ENCODE measurements at regions of chr1 and their contacts with region 1.

Region 1: DNA sequence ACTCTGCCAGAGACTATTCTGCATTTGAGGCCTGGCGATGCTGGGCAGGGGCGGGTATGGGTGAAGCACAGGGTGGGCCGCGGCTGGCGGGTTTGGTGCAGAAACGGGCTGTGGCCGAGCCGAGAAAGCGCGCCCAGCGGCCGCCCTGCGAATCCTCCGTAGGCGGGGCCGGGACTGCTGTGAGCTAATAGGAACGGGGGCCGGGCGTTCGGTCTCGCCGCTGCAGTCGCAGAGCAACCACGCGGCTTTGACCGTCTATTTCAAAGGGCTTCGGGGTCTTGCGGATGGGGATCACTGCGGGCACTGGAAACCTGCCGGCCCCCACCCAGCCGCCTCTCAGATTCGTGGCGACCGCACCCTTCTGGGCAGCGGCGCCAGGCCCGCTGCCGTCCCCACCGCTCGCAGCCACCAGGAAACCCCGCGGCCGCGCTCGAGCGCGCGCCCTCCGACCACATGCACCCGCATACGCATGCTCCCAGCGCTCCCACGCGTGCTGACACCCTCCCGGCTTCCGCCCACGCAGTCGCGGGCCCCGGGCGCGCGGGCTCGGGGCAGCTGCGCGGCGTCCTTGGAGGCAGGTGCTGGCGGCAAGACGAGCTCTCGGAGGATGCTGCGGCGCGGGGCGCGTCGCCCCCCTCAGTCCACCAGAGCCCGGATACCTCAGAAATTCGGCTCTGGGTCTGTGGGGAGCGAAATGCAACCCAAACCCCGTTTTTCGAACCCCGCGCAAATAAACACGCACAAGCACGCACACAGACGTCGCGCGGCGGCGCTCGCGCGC is 32.6 kb downstream of the DNTTIP2 start:
- DNase-seq: peak; percentile 74
- ATAC-seq: peak; percentile 61
- H3K4me3 ChIP-seq: peak overlapping the region; percentile 92
- H3K27ac ChIP-seq: peak overlapping the region; percentile 89
- H3K4me1 ChIP-seq: peaks cover 4% of the 10 kb centered on the region
- H3K27me3 ChIP-seq: no peaks in the 10 kb centered on the region
- CTCF ChIP-seq: 0 out of 2 replicates have a peak, but pooled peaks have one; percentile 13
- POLR2A ChIP-seq: peak; percentile 33; the same call in 1 of the 2 replicates
- RAD21 ChIP-seq: 0 out of 2 replicates have a peak, but pooled peaks have one; percentile 10

Region 2: DNA sequence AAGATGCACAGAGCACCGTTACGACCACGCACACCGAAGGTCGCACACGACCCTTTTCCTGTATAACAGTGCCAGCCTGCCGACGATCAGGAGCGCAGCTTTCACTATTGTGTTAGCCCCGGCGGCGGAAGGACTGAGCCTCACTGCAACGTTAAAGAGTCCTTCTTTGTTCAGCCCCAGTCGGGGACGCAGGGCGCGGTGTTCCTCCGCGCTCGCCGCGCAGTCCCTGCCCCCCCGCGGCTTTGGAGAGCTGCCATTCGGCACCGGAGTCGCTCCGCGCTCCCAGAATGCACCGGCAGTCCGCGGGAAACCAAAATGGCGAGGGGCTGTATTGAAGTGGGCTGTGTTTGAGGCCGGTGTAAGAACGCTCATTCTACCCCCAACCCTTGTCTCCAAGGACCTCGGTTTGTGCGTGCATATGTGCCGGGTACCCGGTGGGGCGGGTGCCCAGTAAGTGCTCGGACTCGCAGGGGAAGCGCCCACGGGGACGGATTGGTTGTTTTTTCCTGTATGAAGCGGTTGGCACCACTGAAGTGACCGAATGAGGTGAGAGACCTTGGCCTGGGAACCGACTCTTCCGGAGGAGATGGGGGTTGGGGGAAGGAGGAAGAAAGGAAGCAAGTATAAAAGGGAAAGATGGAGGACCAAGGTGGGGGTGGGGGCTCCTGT is 767.3 kb before region 1 on chr1 and contains the start of gene MTF2:
- CTCF ChIA-PET with region 1: no interaction called
- POLR2A ChIA-PET with region 1: no interaction called
- dilution Hi-C with region 1: no loop called
- in situ Hi-C with region 1: no loop called
- intact Hi-C with region 1: loop called (anchors 1 kb)
- DNase-seq: peak; percentile 97
- ATAC-seq: peak; percentile 88
- H3K4me3 ChIP-seq: peak within 1 kb of the TSS; percentile 78
- H3K27ac ChIP-seq: peak within 1 kb of the TSS; percentile 77
- H3K4me1 ChIP-seq: no peaks in the 10 kb centered on the region
- H3K27me3 ChIP-seq: no peaks in the 10 kb centered on the region; the same call in 1 of the 2 replicates
- CTCF ChIP-seq: no peak
- POLR2A ChIP-seq: peak; percentile 91
- RAD21 ChIP-seq: 0 out of 2 replicates have a peak, but pooled peaks have one; percentile 3
- total RNA-seq, gene MTF2: 33.3 and 39.8 TPM in 2 replicates

Region 3: GRCh38 chr1:93345633-93346420 is 500.6 kb before region 1 on chr1 and contains the start of gene DR1:
- CTCF ChIA-PET with region 1: interaction called, 3 read pairs
- POLR2A ChIA-PET with region 1: no interaction called
- dilution Hi-C with region 1: no loop called
- in situ Hi-C with region 1: no loop called
- intact Hi-C with region 1: loop called (anchors 5 kb)
- DNase-seq: peak; percentile 95
- ATAC-seq: peak; percentile 90
- H3K4me3 ChIP-seq: peak within 1 kb of the TSS; percentile 83
- H3K27ac ChIP-seq: peak within 1 kb of the TSS; percentile 93
- H3K4me1 ChIP-seq: peaks cover 3% of the 10 kb centered on the region; the same call in 1 of the 2 replicates
- H3K27me3 ChIP-seq: no peaks in the 10 kb centered on the region
- CTCF ChIP-seq: no peak
- POLR2A ChIP-seq: peak; percentile 91
- RAD21 ChIP-seq: no peak
- total RNA-seq, gene DR1: 39.4 and 46.9 TPM in 2 replicates

Region 4: GRCh38 chr1:93437976-93438605 is 408.3 kb before region 1 on chr1:
- CTCF ChIA-PET with region 1: no interaction called
- POLR2A ChIA-PET with region 1: interaction called, 6 read pairs
- dilution Hi-C with region 1: no loop called
- in situ Hi-C with region 1: no loop called
- intact Hi-C with region 1: loop called (anchors 1 kb)
- DNase-seq: peak; percentile 65
- ATAC-seq: peak; percentile 82
- H3K4me3 ChIP-seq: no peak overlapping the region
- H3K27ac ChIP-seq: no peak overlapping the region
- H3K4me1 ChIP-seq: no peaks in the 10 kb centered on the region
- H3K27me3 ChIP-seq: peaks cover 17% of the 10 kb centered on the region
- CTCF ChIP-seq: peak; percentile 78
- POLR2A ChIP-seq: no peak
- RAD21 ChIP-seq: peak; percentile 81

Region 5: DNA sequence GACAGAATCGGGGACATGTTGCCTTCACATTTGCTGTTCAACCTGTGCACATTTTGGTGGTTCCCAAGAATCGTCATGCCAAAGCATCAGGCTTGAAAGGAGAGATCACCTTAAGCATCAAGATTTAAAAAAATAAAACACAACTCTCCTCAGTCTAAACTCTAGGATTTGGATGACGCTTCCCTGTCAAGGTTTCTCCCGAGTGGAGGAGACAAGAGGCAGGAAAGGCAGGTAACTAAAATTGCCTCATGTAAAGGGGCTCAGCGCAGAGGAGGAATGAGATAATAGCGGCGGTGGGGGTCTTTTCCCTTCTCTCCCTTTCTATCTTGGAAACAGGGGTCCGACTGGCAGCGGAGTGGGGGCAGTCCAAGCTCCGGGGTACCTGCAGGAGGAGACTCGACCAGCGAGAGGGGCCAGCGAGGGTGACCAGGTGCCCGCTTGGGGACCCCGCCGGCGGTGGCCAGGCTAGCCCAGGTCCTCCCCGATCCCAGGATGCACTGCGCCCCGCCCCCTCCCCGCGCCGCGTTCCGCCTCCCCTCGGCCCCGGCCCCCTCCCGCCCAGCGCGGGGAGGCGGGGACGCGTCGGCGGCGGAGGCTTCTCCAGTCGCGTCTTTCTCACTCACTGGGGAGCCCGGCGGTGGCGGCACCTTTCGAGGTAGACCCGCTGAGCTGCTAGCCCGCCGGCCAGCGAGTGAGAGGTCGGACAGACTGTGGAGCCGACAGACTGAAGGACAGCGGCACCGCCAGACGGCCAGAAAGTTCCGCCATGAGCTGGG is 398.7 kb before region 1 on chr1 and contains the start of gene FNBP1L:
- CTCF ChIA-PET with region 1: no interaction called
- POLR2A ChIA-PET with region 1: no interaction called
- dilution Hi-C with region 1: no loop called
- in situ Hi-C with region 1: loop called (anchors 5 kb)
- intact Hi-C with region 1: no loop called
- DNase-seq: peak; percentile 52
- ATAC-seq: peak; percentile 93
- H3K4me3 ChIP-seq: peak within 1 kb of the TSS; percentile 99
- H3K27ac ChIP-seq: peak within 1 kb of the TSS; percentile 64
- H3K4me1 ChIP-seq: no peaks in the 10 kb centered on the region
- H3K27me3 ChIP-seq: no peaks in the 10 kb centered on the region
- CTCF ChIP-seq: no peak
- POLR2A ChIP-seq: no peak
- RAD21 ChIP-seq: no peak
- total RNA-seq, gene FNBP1L: 15.2 and 24.4 TPM in 2 replicates

Region 6: DNA sequence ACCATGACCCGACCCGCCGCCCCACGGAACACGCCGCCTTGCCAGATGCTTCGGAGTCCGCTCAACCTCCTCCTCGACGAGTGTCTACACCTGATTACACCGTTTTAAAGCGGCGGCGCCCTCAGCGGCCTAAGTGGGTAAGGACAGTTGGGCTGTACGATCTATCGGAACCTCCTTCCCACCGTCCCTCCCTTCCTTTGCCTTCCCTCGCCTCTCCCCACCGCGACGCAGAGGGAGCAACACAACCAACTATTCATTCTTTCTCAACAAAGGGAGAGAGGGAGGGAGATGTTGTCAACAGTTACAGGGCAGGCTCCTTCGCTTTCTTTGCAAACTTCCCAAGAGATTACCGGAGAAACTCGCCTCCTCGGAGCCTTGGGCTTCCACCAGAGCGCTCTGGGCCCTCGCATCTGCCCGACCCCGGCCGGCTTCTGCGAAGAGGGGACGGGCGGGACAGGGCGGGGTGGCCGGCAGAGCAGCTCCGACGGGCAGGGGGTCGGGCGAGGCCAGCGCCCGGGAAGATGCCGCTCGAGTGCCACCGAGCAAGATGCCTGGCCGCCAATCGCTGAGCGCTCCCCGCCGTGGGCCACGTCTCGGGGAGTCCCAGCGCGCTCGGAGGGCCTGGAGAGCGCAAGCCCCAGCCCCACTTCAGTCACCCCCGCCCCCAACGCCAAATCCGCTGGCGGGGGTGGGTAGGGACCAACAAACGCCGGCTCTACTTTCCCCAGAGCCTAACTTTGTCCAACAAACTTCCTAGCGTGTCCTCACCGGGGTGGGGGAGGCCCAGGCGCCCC is 165.4 kb before region 1 on chr1:
- CTCF ChIA-PET with region 1: no interaction called
- POLR2A ChIA-PET with region 1: no interaction called
- dilution Hi-C with region 1: no loop called
- in situ Hi-C with region 1: no loop called
- intact Hi-C with region 1: loop called (anchors 1 kb)
- DNase-seq: peak; percentile 89
- ATAC-seq: peak; percentile 75
- H3K4me3 ChIP-seq: peak overlapping the region; percentile 57
- H3K27ac ChIP-seq: peak overlapping the region; percentile 67
- H3K4me1 ChIP-seq: peaks cover 21% of the 10 kb centered on the region
- H3K27me3 ChIP-seq: no peaks in the 10 kb centered on the region
- CTCF ChIP-seq: peak; percentile 62
- POLR2A ChIP-seq: no peak
- RAD21 ChIP-seq: peak; percentile 66

Region 7: GRCh38 chr1:93814059-93814794 is 32.2 kb before region 1 on chr1:
- CTCF ChIA-PET with region 1: interaction called, 13 read pairs
- POLR2A ChIA-PET with region 1: interaction called, 7 read pairs
- dilution Hi-C with region 1: no loop called
- in situ Hi-C with region 1: no loop called
- intact Hi-C with region 1: no loop called
- DNase-seq: peak; percentile 84
- ATAC-seq: peak; percentile 88
- H3K4me3 ChIP-seq: no peak overlapping the region
- H3K27ac ChIP-seq: no peak overlapping the region
- H3K4me1 ChIP-seq: peaks cover 10% of the 10 kb centered on the region
- H3K27me3 ChIP-seq: no peaks in the 10 kb centered on the region
- CTCF ChIP-seq: peak; percentile 99
- POLR2A ChIP-seq: peak; percentile 63; the same call in 1 of the 2 replicates
- RAD21 ChIP-seq: peak; percentile 100

Region 8: GRCh38 chr1:94599095-94599813 is 752.9 kb after region 1 on chr1:
- CTCF ChIA-PET with region 1: no interaction called
- POLR2A ChIA-PET with region 1: no interaction called
- dilution Hi-C with region 1: no loop called
- in situ Hi-C with region 1: no loop called
- intact Hi-C with region 1: no loop called
- DNase-seq: peak; percentile 51
- ATAC-seq: peak; percentile 42
- H3K4me3 ChIP-seq: no peak overlapping the region
- H3K27ac ChIP-seq: no peak overlapping the region
- H3K4me1 ChIP-seq: peaks cover 14% of the 10 kb centered on the region
- H3K27me3 ChIP-seq: peaks cover 3% of the 10 kb centered on the region
- CTCF ChIP-seq: peak; percentile 54
- POLR2A ChIP-seq: no peak
- RAD21 ChIP-seq: peak; percentile 67

Measured in IMR-90 (cell line).